Mammary epithelial cell (primary cell): ENCODE measurements at regions of chr7 and their contacts with region 1.

Region 1: DNA sequence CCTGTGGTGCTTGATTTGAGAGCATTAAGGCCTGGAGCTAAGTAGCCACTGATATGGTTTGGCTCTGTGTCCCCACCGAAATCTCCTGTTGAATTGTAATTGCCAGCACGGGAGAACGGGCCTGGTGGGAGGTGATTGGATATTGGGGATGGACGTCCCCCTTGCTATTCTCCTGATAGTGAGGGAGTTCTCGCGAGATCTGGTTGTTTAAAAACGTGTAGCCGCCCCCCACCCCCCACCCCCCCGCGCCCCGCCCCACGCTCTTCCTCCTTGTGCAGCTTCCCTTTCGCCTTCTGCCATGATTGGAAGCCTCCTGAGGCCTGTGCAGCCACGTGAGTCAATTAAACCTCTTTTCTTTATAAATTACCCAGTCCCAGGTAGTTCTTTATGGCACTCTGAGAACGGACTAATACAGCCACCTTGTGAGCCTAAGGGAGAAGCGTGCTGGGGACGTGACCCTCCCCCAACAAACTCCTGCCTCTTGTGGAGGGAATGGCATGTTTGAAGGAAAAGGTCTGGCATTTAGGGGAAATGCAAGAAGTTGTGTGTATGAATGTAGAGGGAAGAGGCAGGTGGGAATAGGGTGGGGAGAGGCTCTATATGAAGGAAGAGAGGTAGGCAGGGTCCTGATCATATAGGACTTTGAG is 118.0 kb upstream of the KMT2C start:
- DNase-seq: no peak
- H3K4me3 ChIP-seq: no peak overlapping the region
- H3K27ac ChIP-seq: no peak overlapping the region
- H3K4me1 ChIP-seq: no peaks in the 10 kb centered on the region
- H3K27me3 ChIP-seq: no peaks in the 10 kb centered on the region
- CTCF ChIP-seq: no peak

Region 2: GRCh38 chr7:152608208-152608607 is 54.4 kb after region 1 on chr7:
- CTCF ChIA-PET with region 1: no interaction called
- dilution Hi-C with region 1: loop called (anchors 5 kb)
- in situ Hi-C with region 1: no loop called
- intact Hi-C with region 1: no loop called
- DNase-seq: no peak
- H3K4me3 ChIP-seq: no peak overlapping the region
- H3K27ac ChIP-seq: no peak overlapping the region
- H3K4me1 ChIP-seq: no peaks in the 10 kb centered on the region
- H3K27me3 ChIP-seq: no peaks in the 10 kb centered on the region
- CTCF ChIP-seq: no peak